Activated CD8-positive, alpha-beta T cell treated with anti-CD3 and anti-CD28 coated beads for 36 hours (primary cell): ENCODE measurements at regions of chr7 and their contacts with region 1.

Region 1: GRCh38 chr7:71733107-71733870 is 601.3 kb downstream of the GALNT17 start:
- DNase-seq: peak; percentile 77
- ATAC-seq: no peak
- H3K4me3 Mint-ChIP-seq: no peak overlapping the region
- H3K27ac Mint-ChIP-seq: no peak overlapping the region
- H3K4me1 Mint-ChIP-seq: no peaks in the 10 kb centered on the region
- H3K27me3 Mint-ChIP-seq: peaks cover 6% of the 10 kb centered on the region
- CTCF ChIP-seq: peak; percentile 88

Region 2: DNA sequence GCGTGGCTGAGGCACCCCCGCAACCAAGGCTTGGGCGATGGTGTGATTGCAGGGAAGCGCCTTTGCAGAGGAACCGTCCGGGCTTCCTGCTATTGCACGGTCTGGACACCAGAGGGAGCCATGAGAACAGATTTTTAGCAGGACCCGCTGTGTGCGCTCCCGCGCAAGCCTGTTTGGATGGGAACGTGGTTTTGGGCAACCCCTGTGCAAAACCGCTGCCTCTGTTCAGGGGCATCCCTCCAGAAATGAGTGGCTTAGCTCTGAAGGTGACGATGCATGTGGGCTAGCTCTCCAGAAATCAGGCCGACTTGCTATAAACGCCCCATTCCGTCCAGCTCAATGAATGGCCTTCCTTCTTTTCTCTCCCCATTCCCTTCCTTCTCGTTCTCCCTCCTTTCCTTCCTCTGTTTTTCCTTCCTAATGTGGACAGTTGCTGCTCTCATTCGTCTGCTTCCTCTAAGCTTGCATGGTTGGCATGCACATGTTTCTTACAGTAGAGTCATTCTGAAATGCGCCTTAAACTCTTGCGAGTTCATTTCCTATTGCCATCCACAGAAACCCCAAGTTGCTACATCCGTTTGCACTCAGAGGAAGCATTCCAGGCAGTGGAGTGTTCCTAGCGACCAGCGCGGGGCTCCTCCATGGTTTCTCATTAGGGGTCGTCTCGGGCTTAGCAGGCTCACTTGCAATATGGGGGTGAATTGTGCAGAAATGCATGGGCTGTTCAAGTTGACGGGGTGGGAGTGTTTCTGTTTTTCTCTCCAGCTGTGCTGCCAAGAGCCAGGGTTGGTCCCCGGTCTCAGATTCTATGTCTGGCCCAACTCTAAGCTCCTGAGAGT is 903.8 kb before region 1 on chr7:
- CTCF ChIA-PET with region 1: interaction called, 21 read pairs
- POLR2A ChIA-PET with region 1: no interaction called
- intact Hi-C with region 1: no loop called
- DNase-seq: peak; percentile 71
- ATAC-seq: peak; percentile 74
- H3K4me3 Mint-ChIP-seq: no peak overlapping the region
- H3K27ac Mint-ChIP-seq: no peak overlapping the region
- H3K4me1 Mint-ChIP-seq: peaks cover 8% of the 10 kb centered on the region
- H3K27me3 Mint-ChIP-seq: peaks cover 17% of the 10 kb centered on the region
- CTCF ChIP-seq: peak; percentile 81

Region 3: GRCh38 chr7:70856866-70857630 is 876.2 kb before region 1 on chr7:
- CTCF ChIA-PET with region 1: interaction called, 10 read pairs
- POLR2A ChIA-PET with region 1: no interaction called
- intact Hi-C with region 1: loop called (anchors 2 kb)
- DNase-seq: peak; percentile 77
- ATAC-seq: no peak
- H3K4me3 Mint-ChIP-seq: no peak overlapping the region
- H3K27ac Mint-ChIP-seq: no peak overlapping the region
- H3K4me1 Mint-ChIP-seq: no peaks in the 10 kb centered on the region
- H3K27me3 Mint-ChIP-seq: peaks cover 1% of the 10 kb centered on the region
- CTCF ChIP-seq: peak; percentile 94

Region 4: DNA sequence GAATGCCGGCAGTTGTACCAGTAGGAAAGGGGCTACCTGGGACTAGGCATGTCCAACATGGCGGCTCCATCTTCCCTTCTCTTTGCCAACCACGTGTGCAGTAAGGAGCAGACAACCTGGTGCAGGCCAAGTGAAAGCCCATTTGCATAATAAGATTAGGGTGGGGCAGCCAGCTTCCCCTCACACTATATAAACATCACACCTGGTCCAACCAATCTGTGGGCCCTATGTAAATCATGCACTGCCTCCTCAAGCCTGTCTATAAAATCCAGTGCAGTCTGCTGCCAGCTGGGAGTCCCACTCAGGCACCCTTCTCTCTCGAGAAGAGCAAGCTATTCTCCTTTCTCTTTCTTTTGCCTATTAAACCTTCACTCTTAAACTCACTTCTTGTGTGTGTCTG is 249.6 kb after region 1 on chr7:
- CTCF ChIA-PET with region 1: no interaction called
- POLR2A ChIA-PET with region 1: no interaction called
- intact Hi-C with region 1: no loop called
- DNase-seq: no peak
- ATAC-seq: no peak
- H3K4me3 Mint-ChIP-seq: no peak overlapping the region
- H3K27ac Mint-ChIP-seq: no peak overlapping the region
- H3K4me1 Mint-ChIP-seq: no peaks in the 10 kb centered on the region
- H3K27me3 Mint-ChIP-seq: no peaks in the 10 kb centered on the region
- CTCF ChIP-seq: no peak